ENCODE measurements at regions of chr22 and their contacts with region 1.

Region 1: GRCh38 chr22:23178512-23179254 is 1.6 kb upstream of the BCR start:
- DNase-seq: peak; percentile 81
- CTCF ChIP-seq: peak; percentile 97

Region 2: GRCh38 chr22:21902296-21903087 is 1276.2 kb before region 1 on chr22:
- in situ Hi-C with region 1: no loop called
- DNase-seq: peak; percentile 60
- CTCF ChIP-seq: no peak

Region 3: GRCh38 chr22:23047265-23047664 is 131.4 kb before region 1 on chr22:
- in situ Hi-C with region 1: no loop called
- DNase-seq: no peak
- CTCF ChIP-seq: no peak

Region 4: DNA sequence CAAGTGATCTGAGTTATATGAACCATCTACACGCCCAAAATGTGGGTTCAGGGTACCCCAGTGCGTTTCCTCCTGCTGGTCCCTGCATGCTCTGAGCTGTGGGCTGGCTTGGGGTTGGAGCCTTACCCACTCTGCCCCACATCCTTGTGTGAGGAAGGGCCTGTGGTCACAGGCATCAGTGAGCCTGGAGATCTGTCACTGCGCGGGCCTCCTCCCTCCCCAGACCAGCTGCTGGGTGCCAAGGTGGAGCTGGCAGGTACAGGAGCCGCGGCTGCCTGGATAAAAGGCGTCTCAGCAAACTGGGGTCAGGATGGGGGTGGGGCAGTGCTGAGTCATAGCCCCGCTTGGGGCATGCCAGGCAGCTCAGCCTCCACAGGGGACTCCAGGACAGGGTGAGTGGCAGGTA is 90.5 kb before region 1 on chr22:
- in situ Hi-C with region 1: no loop called
- DNase-seq: no peak
- CTCF ChIP-seq: no peak

Region 5: DNA sequence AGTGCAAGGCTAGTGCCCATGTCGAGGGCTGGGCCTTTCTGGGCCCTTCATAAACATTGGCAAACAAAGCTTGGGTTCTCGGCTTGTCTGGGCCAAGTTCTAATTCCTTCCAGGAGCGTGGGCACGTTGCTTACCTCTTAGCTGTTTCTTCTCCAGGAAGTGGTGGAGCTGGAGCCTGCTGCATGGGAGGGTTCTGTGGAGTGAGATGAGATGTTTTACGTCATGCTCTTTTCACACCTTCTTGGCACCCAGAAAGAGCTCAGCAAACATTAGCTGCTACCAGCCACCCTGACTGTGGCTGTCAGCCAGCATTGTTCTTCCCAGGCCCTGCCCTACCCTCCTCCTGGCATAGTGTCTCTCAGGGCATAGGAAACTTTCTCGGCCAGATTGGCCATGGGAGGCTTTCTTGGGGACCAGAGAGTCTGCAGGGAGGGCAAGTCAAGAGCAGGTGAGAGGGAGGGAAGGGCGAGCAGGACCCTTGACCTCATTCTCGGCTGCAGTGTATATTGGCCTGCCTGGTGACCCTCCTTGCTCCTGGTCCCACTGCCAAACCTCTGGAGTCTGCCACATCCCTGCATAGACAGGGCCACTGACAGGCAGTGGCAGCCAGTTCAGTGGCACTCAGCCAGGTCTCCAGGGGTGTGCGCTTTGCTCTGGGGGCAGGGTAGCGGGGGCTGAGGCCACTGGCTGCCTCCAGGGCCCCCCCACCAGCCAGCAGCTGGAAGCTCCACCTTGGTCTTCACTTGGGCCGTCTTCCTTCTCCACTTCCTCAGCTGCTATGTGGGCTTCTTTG is 100.4 kb after region 1 on chr22:
- in situ Hi-C with region 1: loop called (anchors 5 kb)
- DNase-seq: no peak
- CTCF ChIP-seq: no peak

Region 6: DNA sequence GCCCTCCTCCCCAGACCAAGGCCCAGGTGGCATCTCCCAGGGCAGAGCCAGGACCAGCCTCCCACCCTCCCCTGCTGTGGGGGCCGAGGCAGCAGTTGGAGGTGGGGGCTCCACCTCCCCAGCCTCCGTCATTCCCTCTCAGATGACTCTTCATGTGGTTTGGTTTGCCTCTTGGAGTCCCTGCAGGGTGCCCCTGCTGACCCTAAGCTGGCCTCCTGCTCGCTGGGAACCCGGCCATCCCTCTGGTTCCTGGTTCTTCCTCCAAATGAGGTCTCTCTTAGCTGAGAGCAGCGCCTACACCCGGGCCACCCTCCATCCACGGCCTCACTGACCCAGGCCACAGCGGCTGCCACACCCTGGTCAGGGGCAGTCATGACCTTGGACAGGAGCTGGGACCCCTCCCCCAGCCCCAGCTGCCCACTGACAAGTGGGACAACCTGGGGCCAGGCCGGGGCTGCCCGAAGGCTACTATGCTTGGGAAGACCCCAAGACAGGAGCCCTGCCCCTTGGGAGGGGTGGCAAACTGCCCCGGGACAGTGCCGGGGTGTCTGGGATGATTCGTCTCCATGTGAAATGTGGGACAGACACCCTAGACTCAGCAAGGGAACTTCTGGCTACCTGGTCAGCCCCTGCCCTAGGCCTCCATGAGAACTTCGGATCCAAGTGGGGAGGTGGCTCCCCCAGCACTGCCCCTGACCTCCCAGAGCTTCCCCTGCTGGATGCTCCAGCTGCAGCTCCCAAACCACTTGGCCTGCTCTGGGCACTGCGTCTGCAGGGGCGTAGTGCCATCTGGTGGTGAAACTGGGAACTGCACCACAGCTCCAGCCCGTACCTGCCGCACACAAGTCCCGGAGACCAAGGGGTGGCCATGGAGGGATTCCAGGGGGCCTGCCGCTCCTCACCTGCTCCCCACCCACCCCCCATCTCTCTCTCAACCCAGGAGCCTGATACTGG is 206.9 kb after region 1 on chr22:
- in situ Hi-C with region 1: loop called (anchors 25 kb)
- DNase-seq: peak; percentile 96
- CTCF ChIP-seq: peak; percentile 99